ENCODE measurements at regions of chr6 and their contacts with region 1.

Region 1: GRCh38 chr6:30459145-30459544 is 30.2 kb upstream of the HLA-E start:
- DNase-seq: no peak
- ATAC-seq: no peak
- H3K4me3 ChIP-seq: no peak overlapping the region
- H3K4me3 Mint-ChIP-seq: no peak overlapping the region
- H3K27ac ChIP-seq: no peak overlapping the region
- H3K27ac Mint-ChIP-seq: no peak overlapping the region
- H3K4me1 ChIP-seq: peaks cover 10 to 19% of the 10 kb centered on the region in 2 experiments
- H3K4me1 Mint-ChIP-seq: peaks cover 22 to 32% (median 22%) of the 10 kb centered on the region in 3 donors
- H3K27me3 ChIP-seq: peaks cover 30 to 66% of the 10 kb centered on the region in 2 experiments
- H3K27me3 Mint-ChIP-seq: peaks cover 87 to 89% of the 10 kb centered on the region in 2 donors

Region 2: DNA sequence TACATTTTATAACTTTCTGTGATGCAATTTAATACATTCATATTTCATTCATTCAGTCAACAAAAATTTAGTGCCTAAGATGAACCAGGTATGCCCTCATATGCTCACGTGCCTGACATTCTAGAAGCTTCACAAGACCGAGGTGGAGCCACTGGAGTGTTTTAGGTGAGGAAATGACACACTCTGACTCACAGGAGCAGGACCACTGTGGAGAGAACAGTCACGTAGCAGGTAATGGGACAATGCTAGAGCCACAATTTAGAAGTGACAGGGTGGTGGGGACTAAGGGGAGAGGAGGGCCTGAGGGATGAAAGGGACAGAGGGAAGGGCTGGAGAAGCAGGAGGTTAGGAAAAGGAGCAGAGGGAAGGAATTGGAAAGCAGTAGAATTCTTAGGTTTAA is 534.4 kb before region 1 on chr6:
- CTCF ChIA-PET with region 1: no interaction called
- POLR2A ChIA-PET with region 1: no interaction called
- DNase-seq: peak in 2 of 35 experiments; percentile 23 to 33
- ATAC-seq: peak in 1 of 4 experiments; percentile 18
- H3K4me3 ChIP-seq: no peak overlapping the region
- H3K4me3 Mint-ChIP-seq: peak overlapping the region; percentile 34 to 87 (median 72)
- H3K27ac ChIP-seq: no peak overlapping the region
- H3K27ac Mint-ChIP-seq: peak overlapping the region; percentile 80 to 90
- H3K4me1 ChIP-seq: peaks cover 5 to 32% of the 10 kb centered on the region in 2 experiments
- H3K4me1 Mint-ChIP-seq: peaks cover 14 to 46% (median 29%) of the 10 kb centered on the region in 3 donors
- H3K27me3 ChIP-seq: no peaks in the 10 kb centered on the region
- H3K27me3 Mint-ChIP-seq: no peaks in the 10 kb centered on the region

Region 3: DNA sequence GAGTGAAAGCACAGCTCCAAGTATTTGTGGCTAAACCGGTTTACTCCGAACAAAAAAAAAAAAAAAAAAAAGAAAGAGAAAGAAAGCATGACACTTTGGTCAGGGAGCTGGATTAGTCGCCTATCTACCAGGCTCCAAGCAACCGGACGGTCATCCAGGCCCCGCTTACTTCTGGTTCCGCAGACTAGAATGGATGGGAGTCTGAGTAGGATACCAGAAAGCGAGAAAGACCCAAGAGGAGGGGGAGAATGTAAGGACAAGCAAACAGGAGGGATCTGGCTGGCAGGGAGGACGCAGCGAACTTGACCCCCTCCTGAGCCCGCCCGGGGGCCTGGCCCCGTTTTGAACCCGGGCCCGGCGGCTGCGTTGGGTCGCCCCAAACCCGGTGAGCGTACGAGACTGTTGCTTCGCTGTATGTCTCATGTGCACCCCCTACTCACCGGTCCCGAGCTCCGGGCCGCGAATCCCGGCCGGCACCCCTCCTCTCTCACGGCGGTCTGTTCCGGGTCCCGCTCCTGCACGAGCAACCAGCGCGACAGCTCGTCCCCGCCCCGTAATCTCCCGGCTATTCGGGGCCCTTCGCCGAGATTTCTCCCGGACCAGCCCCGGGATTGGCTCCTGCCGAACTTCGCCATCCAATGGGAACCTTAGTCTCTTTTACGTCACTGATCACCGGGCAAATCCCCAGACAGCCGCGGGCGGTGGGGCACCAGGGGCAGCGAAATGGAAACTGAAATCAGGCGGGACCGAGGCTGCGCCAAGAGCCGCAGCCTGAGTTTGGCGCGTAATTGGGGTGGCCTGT is 246.1 kb before region 1 on chr6 and contains the start of gene TRIM26:
- CTCF ChIA-PET with region 1: no interaction called
- POLR2A ChIA-PET with region 1: interaction called in 1 of 2 experiments, 10 read pairs
- DNase-seq: peak; percentile 92 to 98 (median 96)
- ATAC-seq: peak; percentile 90 to 93 (median 90)
- H3K4me3 ChIP-seq: peak within 1 kb of the TSS; percentile 63 to 70
- H3K4me3 Mint-ChIP-seq: peak within 1 kb of the TSS; percentile 88 to 99 (median 96)
- H3K27ac ChIP-seq: peak within 1 kb of the TSS; percentile 99
- H3K27ac Mint-ChIP-seq: peak within 1 kb of the TSS; percentile 96 to 99
- H3K4me1 ChIP-seq: peaks cover 22 to 27% of the 10 kb centered on the region in 2 experiments
- H3K4me1 Mint-ChIP-seq: peaks cover 52 to 63% (median 54%) of the 10 kb centered on the region in 3 donors
- H3K27me3 ChIP-seq: no peaks in the 10 kb centered on the region
- H3K27me3 Mint-ChIP-seq: no peaks in the 10 kb centered on the region
- total RNA-seq, gene TRIM26: 46.4 to 57.4 (median 54.1) TPM

Region 4: GRCh38 chr6:30424549-30424948 is 34.6 kb before region 1 on chr6:
- CTCF ChIA-PET with region 1: no interaction called
- POLR2A ChIA-PET with region 1: interaction called in 1 of 2 experiments, 11 read pairs
- DNase-seq: no peak
- ATAC-seq: no peak
- H3K4me3 ChIP-seq: no peak overlapping the region
- H3K4me3 Mint-ChIP-seq: no peak overlapping the region
- H3K27ac ChIP-seq: no peak overlapping the region
- H3K27ac Mint-ChIP-seq: no peak overlapping the region
- H3K4me1 ChIP-seq: no peaks in the 10 kb centered on the region
- H3K4me1 Mint-ChIP-seq: no peaks in the 10 kb centered on the region
- H3K27me3 ChIP-seq: peaks cover 14 to 19% of the 10 kb centered on the region in 2 experiments
- H3K27me3 Mint-ChIP-seq: peaks cover 49 to 62% of the 10 kb centered on the region in 2 donors

Measured in T-cell (primary cell).